Left lung (tissue), 14 donors: ENCODE measurements at regions of chr14 and their contacts with region 1.

Region 1: GRCh38 chr14:96100161-96101029 is 61.2 kb downstream of the C14orf132 start:
- DNase-seq: peak in 3 of 4 donors; percentile 62 to 89 (median 69)
- ATAC-seq: peak; percentile 75
- H3K4me3 ChIP-seq: no peak overlapping the region
- H3K27ac ChIP-seq: no peak overlapping the region
- H3K4me1 ChIP-seq: peaks cover 0 to 8% of the 10 kb centered on the region in 2 donors
- H3K27me3 ChIP-seq: no peaks in the 10 kb centered on the region
- CTCF ChIP-seq: peak; percentile 47 to 80

Region 2: DNA sequence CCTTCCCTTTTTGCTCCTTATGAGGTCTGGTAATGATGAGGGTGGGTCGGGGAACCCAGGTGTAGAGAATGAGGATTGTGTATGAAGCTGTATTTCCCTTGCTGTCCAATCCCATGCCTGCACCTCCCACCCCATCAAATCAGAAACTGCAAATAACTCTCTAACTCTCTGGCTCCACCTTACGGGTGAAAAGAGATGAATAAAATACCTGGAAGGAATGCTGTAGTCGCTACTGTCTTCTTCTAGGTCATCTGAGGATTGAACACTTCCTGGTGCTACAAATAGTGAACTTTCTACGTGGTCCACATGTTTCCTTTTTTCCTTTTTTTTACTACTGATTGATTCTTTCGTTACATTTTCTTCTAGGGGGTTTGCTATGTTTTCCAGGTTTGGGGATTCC is 904.1 kb before region 1 on chr14:
- intact Hi-C with region 1: no loop called
- DNase-seq: no peak
- ATAC-seq: no peak
- H3K4me3 ChIP-seq: no peak overlapping the region
- H3K27ac ChIP-seq: no peak overlapping the region
- H3K4me1 ChIP-seq: peaks cover 0 to 23% of the 10 kb centered on the region in 2 donors
- H3K27me3 ChIP-seq: no peaks in the 10 kb centered on the region
- CTCF ChIP-seq: peak; percentile 9 to 31

Region 3: DNA sequence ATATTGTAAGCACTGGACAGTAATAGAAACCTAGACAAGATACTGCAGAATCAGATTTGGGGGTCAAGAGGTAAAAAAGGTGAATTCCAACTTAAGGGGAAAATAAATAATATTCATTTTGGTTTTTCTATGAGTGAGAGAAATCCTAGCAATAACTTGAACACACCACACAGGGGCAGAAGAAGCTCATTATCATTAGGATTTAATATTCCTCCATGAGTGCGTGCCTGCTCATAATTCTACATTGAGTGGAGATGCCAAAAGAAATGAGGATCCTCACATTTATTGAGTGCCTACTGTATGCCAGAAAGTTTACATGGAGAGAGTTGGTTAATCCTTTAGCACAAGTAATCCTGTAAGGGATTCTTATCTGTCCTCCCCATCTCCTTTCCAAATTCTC is 101.7 kb before region 1 on chr14:
- intact Hi-C with region 1: loop called in 1 of 2 experiments (anchors 5 kb)
- DNase-seq: peak in 1 of 4 donors; percentile 22
- ATAC-seq: peak; percentile 84
- H3K4me3 ChIP-seq: no peak overlapping the region
- H3K27ac ChIP-seq: no peak overlapping the region
- H3K4me1 ChIP-seq: no peaks in the 10 kb centered on the region
- H3K27me3 ChIP-seq: peaks cover 10 to 43% of the 10 kb centered on the region in 2 donors
- CTCF ChIP-seq: peak; percentile 16 to 36

Region 4: GRCh38 chr14:96027431-96028355 is 72.7 kb before region 1 on chr14:
- intact Hi-C with region 1: loop called in 1 of 2 experiments (anchors 10 kb)
- DNase-seq: no peak
- ATAC-seq: no peak
- H3K4me3 ChIP-seq: no peak overlapping the region
- H3K27ac ChIP-seq: no peak overlapping the region
- H3K4me1 ChIP-seq: peaks cover 0 to 8% of the 10 kb centered on the region in 2 donors
- H3K27me3 ChIP-seq: no peaks in the 10 kb centered on the region
- CTCF ChIP-seq: no peak

Region 5: GRCh38 chr14:96275177-96276112 is 175.1 kb after region 1 on chr14:
- intact Hi-C with region 1: loop called (anchors 2 to 10 kb)
- DNase-seq: peak; percentile 57 to 91 (median 73)
- ATAC-seq: peak; percentile 85
- H3K4me3 ChIP-seq: no peak overlapping the region
- H3K27ac ChIP-seq: no peak overlapping the region
- H3K4me1 ChIP-seq: peaks cover 4% of the 10 kb centered on the region in 2 donors
- H3K27me3 ChIP-seq: no peaks in the 10 kb centered on the region
- CTCF ChIP-seq: peak; percentile 86 to 87

Region 6: DNA sequence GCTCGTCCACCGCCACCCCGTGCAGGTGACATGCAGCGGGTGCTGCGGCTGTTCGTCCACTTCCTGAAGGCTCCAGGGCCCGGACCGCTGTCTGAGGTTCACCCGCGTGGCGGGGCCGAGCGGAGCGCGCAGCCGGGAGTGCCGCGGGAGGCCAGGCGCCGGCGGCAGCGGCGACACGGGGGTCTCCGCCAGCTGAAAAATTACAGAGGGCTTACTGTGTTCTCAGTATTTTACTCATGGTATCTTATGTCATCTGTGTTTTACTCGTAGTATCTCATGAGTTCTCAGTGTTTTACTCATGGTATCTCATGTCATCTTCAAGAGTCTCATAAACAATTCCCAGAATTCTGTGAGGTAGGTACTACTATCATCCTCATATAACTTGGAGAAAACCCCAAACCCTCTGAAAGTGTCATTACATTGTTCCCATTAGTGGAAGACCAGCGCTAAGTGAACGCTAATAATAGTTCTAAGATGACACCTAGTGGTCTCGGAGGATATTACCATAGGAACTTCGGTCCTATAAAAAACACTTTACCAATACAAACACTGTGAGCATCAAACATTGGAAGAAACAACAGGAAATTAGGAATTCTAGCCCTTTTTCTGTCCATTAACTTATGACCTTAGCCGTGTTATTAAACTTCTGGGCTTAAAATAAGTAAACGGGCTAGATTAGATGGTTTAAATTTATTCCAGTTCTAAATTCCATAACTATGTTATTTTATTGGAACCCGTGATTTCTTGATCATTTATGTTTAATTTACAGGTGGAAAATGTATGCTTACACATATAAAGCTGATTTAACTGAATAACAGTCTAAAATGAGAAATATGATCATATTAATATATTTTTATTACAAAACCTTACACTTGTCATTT is 324.0 kb after region 1 on chr14:
- intact Hi-C with region 1: loop called in 1 of 2 experiments (anchors 10 kb)
- DNase-seq: peak; percentile 35 to 85 (median 74)
- ATAC-seq: peak; percentile 98
- H3K4me3 ChIP-seq: peak overlapping the region; percentile 15 to 39
- H3K27ac ChIP-seq: no peak overlapping the region
- H3K4me1 ChIP-seq: peaks cover 0 to 9% of the 10 kb centered on the region in 2 donors
- H3K27me3 ChIP-seq: peaks cover 0 to 12% of the 10 kb centered on the region in 2 donors
- CTCF ChIP-seq: peak; percentile 78